ENCODE measurements at regions of chr17 and their contacts with region 1.

Region 1: DNA sequence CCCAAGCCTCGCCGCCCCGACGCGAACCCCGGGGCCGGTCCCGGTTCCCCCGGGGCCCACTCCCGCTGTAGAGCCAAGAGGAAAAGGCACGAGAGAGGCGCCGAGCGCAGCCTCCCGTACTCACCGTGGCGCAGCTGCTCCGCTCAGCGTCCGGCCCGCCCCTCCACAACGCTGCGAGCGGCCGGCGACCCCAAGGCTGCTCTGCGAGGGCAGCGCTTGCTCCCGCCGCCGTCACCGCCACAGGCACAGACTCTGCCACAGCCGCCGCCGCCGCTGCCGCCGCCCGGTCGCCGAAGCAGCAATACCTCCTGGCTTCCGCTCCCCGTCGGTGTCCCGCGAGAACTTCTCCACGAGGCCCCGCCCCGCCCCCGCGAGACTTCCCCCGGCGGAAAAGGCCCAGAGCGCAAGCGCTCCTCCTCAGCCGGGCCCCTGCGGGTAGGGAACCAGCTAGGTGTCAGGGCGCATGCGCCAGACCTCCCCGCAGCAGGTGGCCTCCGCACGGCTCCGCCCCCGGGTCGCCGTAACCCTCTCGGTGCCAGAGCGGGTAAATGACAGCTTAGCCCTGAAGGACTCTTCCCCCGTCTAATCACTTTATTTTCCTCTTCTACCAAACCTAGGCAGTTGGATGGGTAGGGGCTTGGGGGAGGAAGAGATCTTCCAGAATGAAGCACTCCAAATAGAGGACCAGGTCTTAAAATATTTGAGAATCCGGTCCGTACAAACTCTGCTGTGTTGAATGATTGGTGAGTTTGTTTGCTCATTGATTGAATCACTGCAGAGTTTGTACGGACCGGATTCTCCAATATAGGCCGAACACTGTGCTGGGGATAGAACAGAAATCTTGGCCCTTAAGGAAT is at the start of gene GRB2:
- DNase-seq: peak; percentile 99 to 100
- ATAC-seq: peak; percentile 95 to 98 (median 97)
- H3K4me3 ChIP-seq: peak within 1 kb of the TSS; percentile 99
- H3K27ac ChIP-seq: peak within 1 kb of the TSS; percentile 97
- H3K4me1 ChIP-seq: peaks cover 22% of the 10 kb centered on the region
- H3K27me3 ChIP-seq: no peaks in the 10 kb centered on the region
- CTCF ChIP-seq: no peak
- total RNA-seq, gene GRB2: 49.1 to 71.6 (median 58.1) TPM

Region 2: GRCh38 chr17:75289115-75289831 is 116.3 kb before region 1 on chr17 and contains the start of gene SLC25A19:
- intact Hi-C with region 1: loop called in 1 of 2 experiments (anchors 2 kb)
- DNase-seq: peak; percentile 98 to 99
- ATAC-seq: peak; percentile 98 to 99 (median 98)
- H3K4me3 ChIP-seq: peak within 1 kb of the TSS; percentile 70
- H3K27ac ChIP-seq: peak within 1 kb of the TSS; percentile 83
- H3K4me1 ChIP-seq: peaks cover 5% of the 10 kb centered on the region
- H3K27me3 ChIP-seq: no peaks in the 10 kb centered on the region
- CTCF ChIP-seq: peak; percentile 25
- total RNA-seq, gene SLC25A19: 11.3 to 41.7 (median 16.0) TPM

Region 3: DNA sequence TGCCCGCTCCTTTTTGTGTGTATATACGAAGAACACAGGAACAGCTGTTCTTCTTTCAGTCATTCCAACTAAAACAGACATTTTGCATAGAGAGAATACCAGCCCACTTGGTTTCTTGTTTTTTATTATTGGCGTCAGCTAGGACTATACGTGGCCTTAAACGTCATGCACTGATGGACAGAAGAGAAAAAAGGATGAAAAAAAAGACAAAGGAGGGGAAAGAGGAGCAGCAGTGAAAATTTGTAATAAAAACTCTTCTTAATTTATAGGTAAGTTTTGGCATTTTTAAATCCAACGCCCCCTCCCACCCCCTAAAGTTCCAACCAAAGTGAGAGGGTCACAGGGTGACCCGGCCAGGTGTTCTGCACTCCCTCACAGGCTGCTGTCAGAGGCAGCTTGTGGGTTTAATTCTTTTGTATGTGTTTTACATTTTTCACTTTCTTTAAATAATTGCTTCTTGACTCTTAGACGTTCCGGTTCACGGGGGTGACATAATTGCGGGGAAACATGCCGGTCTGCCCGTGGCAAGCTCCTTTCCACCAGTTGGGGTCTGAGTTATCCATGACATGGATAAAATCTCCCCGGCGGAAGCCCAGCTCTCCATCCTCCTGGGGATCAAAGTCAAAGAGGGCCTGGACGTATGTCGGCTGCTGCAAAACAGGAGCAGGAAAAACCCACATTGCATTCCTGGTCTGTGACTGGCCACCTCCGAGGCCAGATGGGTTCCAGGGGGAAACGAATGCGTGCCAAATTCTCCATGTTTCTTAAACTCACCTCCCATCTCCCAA is 85.5 kb before region 1 on chr17:
- intact Hi-C with region 1: loop called (anchors 1 to 2 kb)
- DNase-seq: no peak
- ATAC-seq: no peak
- H3K4me3 ChIP-seq: no peak overlapping the region
- H3K27ac ChIP-seq: no peak overlapping the region
- H3K4me1 ChIP-seq: no peaks in the 10 kb centered on the region
- H3K27me3 ChIP-seq: no peaks in the 10 kb centered on the region
- CTCF ChIP-seq: no peak

Measured in psoas muscle (tissue), 8 donors.